ENCODE measurements at regions of chr7 and their contacts with region 1.

Region 1: DNA sequence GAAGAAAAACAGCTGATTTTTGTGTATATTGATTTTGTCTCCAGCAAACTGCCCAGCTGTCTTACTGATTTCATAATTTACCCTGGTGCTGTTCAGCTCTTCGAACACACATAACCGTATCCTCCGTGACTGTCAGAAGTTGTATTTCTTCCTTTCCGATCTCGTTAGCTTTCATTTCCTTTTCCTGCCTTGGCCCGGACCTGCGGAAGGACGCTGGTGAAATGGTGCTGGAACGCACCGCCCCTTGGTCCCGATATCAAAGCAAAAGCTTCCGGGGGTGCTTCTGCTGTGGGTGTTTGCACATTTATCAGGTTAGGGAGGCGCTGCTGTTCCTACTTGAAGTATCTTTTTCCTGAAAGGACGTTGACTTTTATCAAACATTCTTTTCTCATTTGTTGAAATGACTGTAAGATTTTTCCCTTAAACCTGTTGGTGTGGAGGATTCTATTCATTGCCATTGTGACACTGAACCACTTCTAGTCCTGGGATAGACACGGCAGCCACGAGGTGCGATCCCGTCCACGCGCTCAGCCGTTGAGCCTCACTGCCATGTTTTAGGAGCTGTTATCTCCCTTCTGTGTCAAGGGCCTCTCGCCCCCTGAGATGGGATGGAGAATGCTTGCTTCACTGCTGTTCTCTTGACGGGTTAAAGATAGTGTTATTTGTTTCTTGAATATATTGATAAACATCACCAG is 72.6 kb downstream of the FOXL3 start:
- DNase-seq: peak; percentile 67
- ATAC-seq: peak; percentile 65
- H3K4me3 Mint-ChIP-seq: peak overlapping the region; percentile 62
- H3K27ac Mint-ChIP-seq: peak overlapping the region; percentile 90
- H3K4me1 Mint-ChIP-seq: peaks cover 67% of the 10 kb centered on the region
- H3K27me3 Mint-ChIP-seq: no peaks in the 10 kb centered on the region

Region 2: GRCh38 chr7:351681-352480 is 10.7 kb before region 1 on chr7:
- CTCF ChIA-PET with region 1: no interaction called
- POLR2A ChIA-PET with region 1: no interaction called
- intact Hi-C with region 1: loop called in 1 of 2 experiments (anchors 1 kb)
- DNase-seq: peak; percentile 69
- ATAC-seq: peak; percentile 71
- H3K4me3 Mint-ChIP-seq: no peak overlapping the region
- H3K27ac Mint-ChIP-seq: no peak overlapping the region
- H3K4me1 Mint-ChIP-seq: peaks cover 12% of the 10 kb centered on the region
- H3K27me3 Mint-ChIP-seq: no peaks in the 10 kb centered on the region

Region 3: GRCh38 chr7:381211-382042 is 18.9 kb after region 1 on chr7:
- CTCF ChIA-PET with region 1: interaction called, 4 read pairs
- POLR2A ChIA-PET with region 1: no interaction called
- intact Hi-C with region 1: loop called in 1 of 2 experiments (anchors 1 kb)
- DNase-seq: peak; percentile 55
- ATAC-seq: peak; percentile 65
- H3K4me3 Mint-ChIP-seq: peak overlapping the region; percentile 8
- H3K27ac Mint-ChIP-seq: peak overlapping the region; percentile 64
- H3K4me1 Mint-ChIP-seq: peaks cover 25% of the 10 kb centered on the region
- H3K27me3 Mint-ChIP-seq: no peaks in the 10 kb centered on the region

Region 4: DNA sequence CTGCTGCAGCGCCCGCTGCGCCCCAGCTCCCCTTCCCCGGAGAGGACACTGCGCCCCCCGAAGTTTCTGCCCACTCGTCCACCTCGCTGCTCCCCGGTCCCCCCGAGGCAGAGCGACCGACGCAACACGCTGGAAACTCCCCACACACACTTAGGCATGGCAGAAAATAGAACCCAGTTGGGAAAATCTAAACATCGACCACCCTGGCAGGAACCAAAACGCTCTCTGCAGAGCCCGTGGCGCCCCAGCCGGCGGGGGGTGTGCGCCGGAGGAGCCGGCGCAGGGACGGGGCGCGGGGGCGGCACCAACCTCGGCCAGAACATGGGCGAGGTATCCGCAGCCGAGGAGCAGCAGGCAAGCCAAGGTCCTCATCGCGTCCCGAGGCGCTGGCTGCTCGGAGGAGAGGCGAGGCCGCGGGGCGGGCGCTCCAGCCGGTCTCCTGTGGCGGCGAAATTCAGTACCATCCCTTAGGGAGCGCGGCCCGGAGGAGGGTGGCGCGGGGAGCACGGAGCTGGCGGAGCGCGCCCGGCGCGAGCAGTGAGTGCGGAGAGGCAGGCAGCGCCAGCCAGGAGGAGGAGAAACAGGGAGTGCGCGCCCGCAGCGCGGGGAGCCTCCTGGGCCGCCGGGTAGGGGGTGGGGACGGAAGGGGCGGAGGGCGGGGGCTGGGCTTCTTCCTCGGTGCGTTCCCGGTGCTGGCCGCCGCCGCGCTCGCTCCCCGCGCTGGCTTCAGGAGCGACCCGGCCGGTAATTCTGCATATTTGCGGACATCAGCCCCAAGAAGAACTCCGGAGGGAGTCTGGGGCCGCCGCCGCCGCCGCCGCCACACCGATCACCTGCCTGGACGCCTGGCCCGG is 156.3 kb after region 1 on chr7:
- CTCF ChIA-PET with region 1: no interaction called
- POLR2A ChIA-PET with region 1: no interaction called
- intact Hi-C with region 1: loop called in 1 of 2 experiments (anchors 5 kb)
- DNase-seq: peak; percentile 75
- ATAC-seq: peak; percentile 42
- H3K4me3 Mint-ChIP-seq: peak overlapping the region; percentile 73
- H3K27ac Mint-ChIP-seq: no peak overlapping the region
- H3K4me1 Mint-ChIP-seq: peaks cover 16% of the 10 kb centered on the region
- H3K27me3 Mint-ChIP-seq: peaks cover 37% of the 10 kb centered on the region

Region 5: GRCh38 chr7:801940-802381 is 439.4 kb after region 1 on chr7:
- CTCF ChIA-PET with region 1: no interaction called
- POLR2A ChIA-PET with region 1: no interaction called
- intact Hi-C with region 1: no loop called
- DNase-seq: no peak
- ATAC-seq: no peak
- H3K4me3 Mint-ChIP-seq: no peak overlapping the region
- H3K27ac Mint-ChIP-seq: no peak overlapping the region
- H3K4me1 Mint-ChIP-seq: no peaks in the 10 kb centered on the region
- H3K27me3 Mint-ChIP-seq: no peaks in the 10 kb centered on the region

Region 6: GRCh38 chr7:831596-832166 is 469.1 kb after region 1 on chr7:
- CTCF ChIA-PET with region 1: no interaction called
- POLR2A ChIA-PET with region 1: no interaction called
- intact Hi-C with region 1: loop called in 1 of 2 experiments (anchors 5 kb)
- DNase-seq: no peak
- ATAC-seq: peak; percentile 69
- H3K4me3 Mint-ChIP-seq: peak overlapping the region; percentile 63
- H3K27ac Mint-ChIP-seq: peak overlapping the region; percentile 98
- H3K4me1 Mint-ChIP-seq: peaks cover 64% of the 10 kb centered on the region
- H3K27me3 Mint-ChIP-seq: no peaks in the 10 kb centered on the region

Measured in activated CD4-positive, alpha-beta T cell treated with anti-CD3 and anti-CD28 coated beads for 36 hours (primary cell).